Activated naive CD4-positive, alpha-beta T cell treated with anti-CD3 and anti-CD28 coated beads for 36 hours (primary cell): ENCODE measurements at regions of chr3 and their contacts with region 1.

Region 1: GRCh38 chr3:58491506-58492402 is at the start of gene KCTD6:
- DNase-seq: peak; percentile 83
- H3K4me3 Mint-ChIP-seq: peak within 1 kb of the TSS; percentile 88
- H3K27ac Mint-ChIP-seq: peak within 1 kb of the TSS; percentile 80
- H3K4me1 Mint-ChIP-seq: peaks cover 47% of the 10 kb centered on the region
- H3K27me3 Mint-ChIP-seq: no peaks in the 10 kb centered on the region
- total RNA-seq, gene KCTD6: 8.4 to 9.9 TPM

Region 2: DNA sequence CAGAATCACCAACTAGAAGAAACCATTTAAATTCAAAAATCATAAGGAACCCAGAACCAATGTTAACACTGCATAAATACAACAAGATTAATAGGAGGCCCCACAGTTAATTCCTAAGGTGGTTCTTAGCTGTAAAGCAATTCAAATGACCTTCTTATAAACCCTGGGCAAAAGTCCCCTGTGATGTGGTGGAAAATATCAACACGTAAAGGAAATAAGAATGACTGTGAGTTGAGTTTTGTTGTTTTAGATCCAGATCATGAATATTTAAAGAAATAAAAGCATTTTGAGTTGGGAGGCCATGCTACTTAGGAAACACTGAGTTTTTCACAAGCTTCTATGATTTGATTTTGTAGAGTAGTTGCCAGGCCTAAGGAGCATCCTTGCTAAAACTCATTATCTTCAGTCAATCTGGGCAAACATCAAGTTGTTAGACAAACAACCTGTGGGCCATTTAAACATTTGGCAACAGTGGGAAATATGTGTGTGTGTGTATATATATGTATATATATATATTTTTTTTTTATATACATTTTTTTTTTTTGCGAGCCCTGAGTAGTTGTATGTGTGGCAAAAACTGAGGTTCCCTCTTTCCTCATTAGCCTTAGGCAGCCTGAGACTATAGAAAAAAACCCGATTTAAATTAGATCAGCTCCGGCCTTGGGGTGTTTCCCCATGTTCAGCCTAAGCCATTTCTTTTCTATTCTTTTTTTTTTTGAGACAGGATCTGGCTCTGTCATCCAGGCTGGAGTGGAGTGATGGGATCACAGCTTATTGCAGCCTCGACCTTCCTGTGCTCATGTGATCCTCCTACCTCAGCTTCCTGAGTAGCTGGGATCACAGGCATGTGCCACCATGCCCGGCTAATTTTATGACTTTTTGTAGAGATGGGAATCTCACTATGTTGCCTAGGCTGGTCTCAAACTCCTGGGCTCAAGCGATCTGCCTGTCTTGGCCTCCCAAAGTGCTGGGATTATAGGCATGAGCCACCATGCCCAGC is 167.1 kb before region 1 on chr3:
- CTCF ChIA-PET with region 1: interaction called, 3 read pairs
- intact Hi-C with region 1: loop called (anchors 1 kb)
- DNase-seq: peak; percentile 21
- H3K4me3 Mint-ChIP-seq: peak overlapping the region; percentile 16
- H3K27ac Mint-ChIP-seq: peak overlapping the region; percentile 89
- H3K4me1 Mint-ChIP-seq: peaks cover 42% of the 10 kb centered on the region
- H3K27me3 Mint-ChIP-seq: no peaks in the 10 kb centered on the region

Region 3: DNA sequence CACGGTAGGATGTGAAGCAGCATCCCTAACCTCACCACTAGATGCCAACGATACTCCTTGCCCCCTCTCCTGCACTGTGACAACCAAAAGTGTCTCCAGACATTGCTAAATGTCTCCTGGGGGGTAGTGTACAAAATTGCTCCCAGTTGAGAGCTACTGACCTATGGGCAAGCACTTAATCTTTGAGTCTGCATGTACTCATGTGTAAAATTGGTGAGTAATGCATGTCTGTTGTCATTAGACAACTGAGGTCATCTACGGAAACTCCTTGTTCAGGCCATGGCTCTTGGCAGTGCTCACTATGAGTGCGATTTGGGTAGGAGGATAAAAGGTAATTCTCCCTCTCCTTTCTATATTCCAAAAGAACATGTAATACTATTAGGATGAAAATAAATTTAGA is 87.4 kb before region 1 on chr3:
- CTCF ChIA-PET with region 1: no interaction called
- intact Hi-C with region 1: no loop called
- DNase-seq: no peak
- H3K4me3 Mint-ChIP-seq: no peak overlapping the region
- H3K27ac Mint-ChIP-seq: no peak overlapping the region
- H3K4me1 Mint-ChIP-seq: no peaks in the 10 kb centered on the region
- H3K27me3 Mint-ChIP-seq: no peaks in the 10 kb centered on the region

Region 4: GRCh38 chr3:58422756-58423325 is 68.9 kb before region 1 on chr3:
- CTCF ChIA-PET with region 1: no interaction called
- intact Hi-C with region 1: no loop called
- DNase-seq: no peak
- H3K4me3 Mint-ChIP-seq: no peak overlapping the region
- H3K27ac Mint-ChIP-seq: no peak overlapping the region
- H3K4me1 Mint-ChIP-seq: peaks cover 4% of the 10 kb centered on the region
- H3K27me3 Mint-ChIP-seq: no peaks in the 10 kb centered on the region

Region 5: DNA sequence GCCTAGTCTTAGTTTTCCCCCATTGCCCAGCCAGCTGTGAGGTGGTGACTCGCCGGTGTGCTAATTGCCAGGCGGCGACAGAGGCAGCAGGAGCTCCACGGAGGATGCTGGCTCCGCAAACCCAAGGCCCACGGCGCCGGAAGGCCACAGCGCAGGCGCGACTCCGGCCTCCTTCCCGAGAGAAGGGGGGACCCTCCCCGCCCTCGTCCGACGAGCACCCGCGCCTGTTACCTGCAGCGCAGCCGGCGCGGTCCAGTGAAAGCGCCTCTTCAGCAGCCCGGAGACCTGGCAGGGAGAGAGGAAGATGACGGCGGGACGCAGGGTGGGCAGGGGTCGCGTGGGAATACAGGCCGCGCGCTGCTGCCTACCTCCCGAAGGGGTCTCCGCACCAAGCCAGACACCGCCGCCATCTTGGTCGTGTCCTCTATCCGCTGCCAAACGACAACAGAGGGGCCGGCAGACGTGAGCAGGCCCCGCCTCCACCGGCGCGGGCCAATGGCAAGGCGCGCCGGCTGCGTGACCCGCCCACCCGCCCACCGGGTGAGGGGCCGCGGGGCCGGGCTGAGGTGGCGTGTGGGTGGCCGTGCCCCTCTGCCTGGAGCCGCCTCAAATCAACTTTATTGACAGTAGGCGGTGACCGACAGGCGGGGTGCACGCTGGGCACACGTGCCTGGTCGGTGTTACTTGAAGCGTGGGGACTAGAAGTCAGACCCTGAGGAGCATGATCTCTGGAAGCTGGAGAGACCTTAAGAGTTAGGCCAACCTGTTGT is 58.2 kb before region 1 on chr3 and contains the start of gene PDHB:
- CTCF ChIA-PET with region 1: interaction called, 5 read pairs
- intact Hi-C with region 1: loop called (anchors 1 kb)
- DNase-seq: peak; percentile 89
- H3K4me3 Mint-ChIP-seq: peak within 1 kb of the TSS; percentile 91
- H3K27ac Mint-ChIP-seq: peak within 1 kb of the TSS; percentile 92
- H3K4me1 Mint-ChIP-seq: peaks cover 20% of the 10 kb centered on the region
- H3K27me3 Mint-ChIP-seq: no peaks in the 10 kb centered on the region
- total RNA-seq, gene PDHB: 51.6 to 53.7 TPM

Region 6: DNA sequence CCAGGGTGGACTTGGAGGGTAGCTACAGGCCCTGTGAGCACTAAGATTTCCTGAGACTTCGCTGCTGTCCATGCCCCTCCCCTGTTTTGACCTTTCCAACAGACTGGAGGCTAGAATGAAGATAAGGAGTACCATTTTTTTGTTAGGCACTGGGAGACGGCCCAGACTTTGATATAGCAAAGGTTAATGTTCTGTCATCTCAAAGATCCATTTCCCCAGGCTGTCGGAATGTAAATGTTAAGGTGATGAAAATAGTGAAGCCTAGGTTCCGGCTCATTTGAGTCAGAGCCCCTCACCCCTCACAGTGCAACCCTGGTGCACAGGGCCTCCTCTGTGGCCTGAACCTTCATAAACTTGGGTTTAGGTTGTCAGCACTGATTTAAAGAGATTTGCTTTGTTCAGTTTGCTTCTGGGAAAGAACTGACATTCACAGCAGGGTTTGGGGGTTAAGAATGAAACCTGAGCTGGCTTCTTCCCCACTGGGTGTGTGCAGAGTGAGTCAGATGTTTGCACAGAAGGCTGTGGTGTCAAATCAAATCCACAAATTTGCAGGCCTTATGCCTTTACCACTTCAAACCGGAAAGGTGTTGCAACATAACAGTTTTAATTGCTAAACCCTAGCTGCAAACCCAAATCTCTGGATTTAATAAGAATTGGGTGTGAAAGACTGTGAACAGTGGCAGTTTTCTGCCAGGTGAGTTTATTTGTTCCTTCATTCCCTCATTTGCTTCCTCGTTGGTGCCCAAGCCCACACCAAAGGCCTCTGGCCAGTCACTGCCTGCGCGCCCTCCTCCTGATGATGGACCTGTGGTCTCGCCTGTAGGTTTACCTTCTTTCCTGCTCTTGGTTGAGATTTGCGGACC is 20.5 kb before region 1 on chr3:
- CTCF ChIA-PET with region 1: interaction called, 12 read pairs
- intact Hi-C with region 1: loop called (anchors 1 kb)
- DNase-seq: peak; percentile 81
- H3K4me3 Mint-ChIP-seq: no peak overlapping the region
- H3K27ac Mint-ChIP-seq: peak overlapping the region; percentile 86
- H3K4me1 Mint-ChIP-seq: peaks cover 20% of the 10 kb centered on the region
- H3K27me3 Mint-ChIP-seq: no peaks in the 10 kb centered on the region

Region 7: GRCh38 chr3:60456180-60456579 is 1964.4 kb after region 1 on chr3:
- CTCF ChIA-PET with region 1: no interaction called
- intact Hi-C with region 1: no loop called
- DNase-seq: peak; percentile 20
- H3K4me3 Mint-ChIP-seq: no peak overlapping the region
- H3K27ac Mint-ChIP-seq: no peak overlapping the region
- H3K4me1 Mint-ChIP-seq: peaks cover 15% of the 10 kb centered on the region
- H3K27me3 Mint-ChIP-seq: no peaks in the 10 kb centered on the region